Colonic mucosa (tissue), 4 donors: ENCODE measurements at regions of chr20 and their contacts with region 1.

Region 1: GRCh38 chr20:41738604-41739206 is 120.5 kb upstream of the CHD6 start:
- DNase-seq: peak; percentile 41
- H3K4me3 ChIP-seq: no peak overlapping the region
- H3K27ac ChIP-seq: no peak overlapping the region
- H3K4me1 ChIP-seq: no peaks in the 10 kb centered on the region
- H3K27me3 ChIP-seq: no peaks in the 10 kb centered on the region
- CTCF ChIP-seq: peak; percentile 76

Region 2: GRCh38 chr20:41392871-41393704 is 345.6 kb before region 1 on chr20:
- intact Hi-C with region 1: no loop called
- DNase-seq: no peak
- H3K4me3 ChIP-seq: no peak overlapping the region
- H3K27ac ChIP-seq: no peak overlapping the region
- H3K4me1 ChIP-seq: no peaks in the 10 kb centered on the region
- H3K27me3 ChIP-seq: no peaks in the 10 kb centered on the region
- CTCF ChIP-seq: no peak

Region 3: GRCh38 chr20:42530822-42531448 is 792.2 kb after region 1 on chr20:
- intact Hi-C with region 1: loop called (anchors 10 kb)
- DNase-seq: no peak
- H3K4me3 ChIP-seq: no peak overlapping the region
- H3K27ac ChIP-seq: no peak overlapping the region
- H3K4me1 ChIP-seq: no peaks in the 10 kb centered on the region
- H3K27me3 ChIP-seq: no peaks in the 10 kb centered on the region
- CTCF ChIP-seq: peak; percentile 52

Region 4: GRCh38 chr20:43408848-43409576 is 1670.3 kb after region 1 on chr20:
- intact Hi-C with region 1: loop called (anchors 5 kb)
- DNase-seq: no peak
- H3K4me3 ChIP-seq: no peak overlapping the region
- H3K27ac ChIP-seq: no peak overlapping the region
- H3K4me1 ChIP-seq: no peaks in the 10 kb centered on the region
- H3K27me3 ChIP-seq: no peaks in the 10 kb centered on the region
- CTCF ChIP-seq: peak; percentile 46